ENCODE measurements at regions of chr19 and their contacts with region 1.

Region 1: DNA sequence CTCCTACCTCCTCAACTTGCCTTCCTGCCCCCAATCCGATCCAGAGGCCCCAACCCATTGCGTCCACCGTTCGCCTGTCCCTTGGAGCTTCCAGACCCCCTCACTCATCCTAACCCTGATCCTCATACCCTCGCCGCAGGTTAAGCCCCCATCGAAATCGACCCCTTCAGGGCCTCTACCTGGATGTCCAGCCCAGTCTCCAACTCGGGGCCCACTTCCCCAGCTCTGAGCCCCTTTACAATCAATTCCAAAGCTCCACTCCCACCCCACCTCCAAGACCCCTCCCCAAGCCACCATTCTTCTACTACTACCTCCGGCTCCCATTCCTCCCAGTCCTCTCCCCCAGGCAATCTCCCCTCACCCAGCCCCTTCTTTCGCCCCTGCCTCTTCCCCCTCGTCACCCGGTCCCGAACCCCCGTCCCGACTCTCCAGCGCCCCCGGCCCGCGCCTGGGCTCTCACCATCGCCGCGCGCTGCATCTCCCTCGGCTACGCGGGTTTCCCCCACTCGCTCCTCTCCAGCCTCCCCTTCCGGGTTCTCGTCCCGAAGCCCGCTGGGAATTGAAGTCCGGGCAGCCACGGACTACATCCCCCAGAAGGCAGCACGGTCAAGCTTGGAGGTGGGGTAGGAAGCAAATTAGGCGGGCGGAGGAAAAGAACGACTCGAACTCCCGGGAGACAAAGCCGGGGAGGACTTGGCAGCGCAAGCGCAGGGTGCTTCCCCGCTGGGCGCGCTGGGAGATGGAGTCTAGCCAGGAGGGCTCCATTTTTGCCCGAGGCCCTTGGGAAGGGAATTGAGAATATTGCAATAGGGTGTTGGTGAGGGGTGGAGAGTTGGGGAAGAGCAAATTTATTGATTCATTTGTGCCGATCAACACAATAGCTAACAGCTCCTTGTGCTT is at the start of gene FBXO46:
- DNase-seq: peak; percentile 98
- total RNA-seq, gene FBXO46: 8.2 TPM

Region 2: DNA sequence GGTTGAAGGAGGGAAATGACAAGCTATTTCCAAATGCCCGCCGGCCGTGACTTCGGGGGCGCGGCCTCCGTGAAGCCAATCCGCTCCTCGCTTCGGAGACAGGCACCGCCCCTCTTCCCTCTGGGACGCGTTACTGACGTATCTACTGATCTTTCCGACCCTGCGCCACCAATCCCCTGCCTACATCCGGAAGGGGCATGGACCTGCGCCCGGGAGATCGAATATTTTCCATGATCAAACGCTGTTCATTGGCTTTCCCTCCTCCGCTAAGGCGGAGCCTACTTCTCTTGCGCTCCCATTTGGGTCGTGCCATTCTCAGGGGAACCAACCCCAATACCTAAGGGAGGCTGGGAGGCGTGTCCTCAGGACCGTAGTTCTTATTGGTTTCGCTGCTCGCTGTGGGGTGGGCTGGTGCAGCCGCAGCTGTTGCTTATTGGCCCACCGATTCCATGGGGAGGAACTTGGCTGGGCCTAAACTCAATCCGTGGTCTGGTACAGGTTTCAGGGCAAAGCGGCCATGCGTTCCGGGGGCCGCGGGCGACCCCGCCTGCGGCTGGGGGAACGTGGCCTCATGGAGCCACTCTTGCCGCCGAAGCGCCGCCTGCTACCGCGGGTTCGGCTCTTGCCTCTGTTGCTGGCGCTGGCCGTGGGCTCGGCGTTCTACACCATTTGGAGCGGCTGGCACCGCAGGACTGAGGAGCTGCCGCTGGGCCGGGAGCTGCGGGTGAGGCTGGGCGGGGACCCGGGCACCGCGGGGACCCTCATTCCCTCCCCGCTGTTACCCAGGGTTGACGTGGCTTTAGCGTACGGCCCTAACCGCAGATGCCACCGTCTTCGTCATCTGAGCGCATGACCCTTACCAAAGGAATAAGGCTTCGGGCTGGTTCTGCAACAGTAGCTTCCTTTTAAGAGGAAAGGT is 38.2 kb before region 1 on chr19 and contains the start of gene QPCTL:
- intact Hi-C with region 1: loop called (anchors 5 kb)
- DNase-seq: peak; percentile 97
- total RNA-seq, gene QPCTL: 2.6 TPM